AG04450 (cell line): ENCODE measurements at regions of chr1 and their contacts with region 1.

Region 1: GRCh38 chr1:222618001-222618879 is at the start of gene MIA3:
- DNase-seq: no peak
- H3K4me3 ChIP-seq: peak within 1 kb of the TSS; percentile 74
- H3K27ac ChIP-seq: peak within 1 kb of the TSS; percentile 69
- H3K27me3 ChIP-seq: peaks cover 4% of the 10 kb centered on the region
- CTCF ChIP-seq: no peak
- polyA plus RNA-seq, gene MIA3: 47.2 and 53.6 TPM in 2 replicates

Region 2: GRCh38 chr1:222465211-222466041 is 152.8 kb before region 1 on chr1:
- CTCF ChIA-PET with region 1: interaction called, 17 read pairs
- POLR2A ChIA-PET with region 1: interaction called, 3 read pairs
- DNase-seq: peak; percentile 82
- H3K4me3 ChIP-seq: peak overlapping the region; percentile 50
- H3K27ac ChIP-seq: peak overlapping the region; percentile 96
- H3K27me3 ChIP-seq: no peaks in the 10 kb centered on the region
- CTCF ChIP-seq: peak; percentile 94

Region 3: DNA sequence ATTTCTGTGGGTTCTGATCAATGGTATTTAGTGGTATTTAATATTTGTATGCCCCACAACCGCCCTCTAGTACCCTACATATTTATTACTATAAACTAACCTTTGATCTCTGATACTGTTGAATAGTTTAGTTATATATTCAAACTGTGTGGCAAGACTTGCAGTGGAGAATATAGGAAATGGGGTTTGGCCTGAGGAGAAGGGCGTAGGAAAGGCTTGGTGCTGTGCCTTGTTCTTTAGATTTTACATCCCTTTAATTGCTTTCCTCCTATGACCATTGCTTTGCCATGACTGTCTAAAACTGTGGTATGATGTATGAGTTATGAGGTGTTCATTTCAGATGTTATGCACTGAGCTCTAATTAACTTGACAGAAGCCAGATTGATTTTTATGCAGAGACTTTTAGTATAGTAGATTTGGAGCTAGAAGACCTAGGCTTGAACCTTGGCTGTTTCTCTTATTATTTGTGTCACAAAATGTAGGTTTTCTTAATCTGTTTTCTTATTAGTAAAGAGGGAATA is 215.2 kb after region 1 on chr1:
- CTCF ChIA-PET with region 1: no interaction called
- POLR2A ChIA-PET with region 1: no interaction called
- DNase-seq: no peak
- H3K4me3 ChIP-seq: no peak overlapping the region
- H3K27ac ChIP-seq: no peak overlapping the region
- H3K27me3 ChIP-seq: no peaks in the 10 kb centered on the region
- CTCF ChIP-seq: no peak